Heart left ventricle (tissue), 16 donors: ENCODE measurements at regions of chr2 and their contacts with region 1.

Region 1: DNA sequence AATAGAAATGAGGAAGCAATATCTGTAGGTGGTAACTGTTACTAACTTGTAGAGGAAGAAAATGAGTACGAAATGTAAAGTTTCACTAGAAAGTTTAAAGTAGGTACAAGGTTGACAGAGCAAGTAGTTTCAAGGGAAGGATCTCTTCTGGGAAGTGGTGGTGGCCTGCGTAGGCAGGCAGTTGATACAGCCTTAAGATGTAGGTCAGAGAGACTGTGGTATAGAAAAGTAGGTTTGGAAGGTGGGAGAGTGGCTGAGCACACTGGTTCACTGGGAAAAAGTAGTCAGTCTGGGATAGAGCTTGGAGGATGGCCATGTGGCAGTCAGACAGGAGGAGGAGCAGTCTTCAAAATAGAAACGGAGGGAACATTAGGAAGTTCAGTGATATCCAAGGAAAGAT is 23.5 kb downstream of the KDM3A start:
- DNase-seq: peak in 4 of 5 donors; percentile 27 to 57 (median 44)
- ATAC-seq: peak; percentile 71 to 74 (median 72)
- H3K4me3 ChIP-seq: no peak overlapping the region
- H3K27ac ChIP-seq: peak overlapping the region in 7 of 12 donors; percentile 2 to 35 (median 6)
- H3K4me1 ChIP-seq: peaks cover 0 to 56% (median 28%) of the 10 kb centered on the region in 12 donors
- H3K27me3 ChIP-seq: no peaks in the 10 kb centered on the region
- CTCF ChIP-seq: no peak
- POLR2A ChIP-seq: no peak

Region 2: DNA sequence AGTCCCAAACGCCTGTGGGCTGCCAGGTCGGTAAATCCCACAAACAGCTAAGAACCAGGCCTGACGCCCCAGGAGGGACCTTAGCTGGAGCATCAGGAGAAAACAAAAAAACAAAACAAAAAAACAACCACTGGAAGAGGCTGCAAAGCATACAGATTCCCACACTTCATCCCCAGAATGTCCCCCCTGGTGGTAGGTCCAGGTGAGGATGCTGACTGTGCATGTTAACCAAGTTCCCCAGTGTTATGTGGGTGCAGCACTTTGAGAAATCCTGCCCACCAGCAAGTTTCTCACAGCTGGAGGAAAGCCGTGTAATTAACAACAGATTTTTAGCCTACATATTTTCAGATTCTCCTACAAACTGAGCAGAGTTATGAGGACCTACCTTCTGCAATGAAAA is 591.0 kb before region 1 on chr2:
- intact Hi-C with region 1: no loop called
- DNase-seq: no peak
- ATAC-seq: no peak
- H3K4me3 ChIP-seq: no peak overlapping the region
- H3K27ac ChIP-seq: no peak overlapping the region
- H3K4me1 ChIP-seq: peaks cover 0 to 39% (median 0%) of the 10 kb centered on the region in 12 donors
- H3K27me3 ChIP-seq: no peaks in the 10 kb centered on the region
- CTCF ChIP-seq: peak in 1 of 12 donors; percentile 14
- POLR2A ChIP-seq: no peak

Region 3: GRCh38 chr2:86492048-86492453 is 27.4 kb after region 1 on chr2:
- intact Hi-C with region 1: loop called in 1 of 10 experiments (anchors 2 kb)
- DNase-seq: no peak
- ATAC-seq: peak; percentile 16 to 65 (median 44)
- H3K4me3 ChIP-seq: no peak overlapping the region
- H3K27ac ChIP-seq: peak overlapping the region in 8 of 12 donors; percentile 11 to 72 (median 47)
- H3K4me1 ChIP-seq: peaks cover 0 to 29% (median 11%) of the 10 kb centered on the region in 12 donors
- H3K27me3 ChIP-seq: no peaks in the 10 kb centered on the region
- CTCF ChIP-seq: no peak
- POLR2A ChIP-seq: no peak

Region 4: DNA sequence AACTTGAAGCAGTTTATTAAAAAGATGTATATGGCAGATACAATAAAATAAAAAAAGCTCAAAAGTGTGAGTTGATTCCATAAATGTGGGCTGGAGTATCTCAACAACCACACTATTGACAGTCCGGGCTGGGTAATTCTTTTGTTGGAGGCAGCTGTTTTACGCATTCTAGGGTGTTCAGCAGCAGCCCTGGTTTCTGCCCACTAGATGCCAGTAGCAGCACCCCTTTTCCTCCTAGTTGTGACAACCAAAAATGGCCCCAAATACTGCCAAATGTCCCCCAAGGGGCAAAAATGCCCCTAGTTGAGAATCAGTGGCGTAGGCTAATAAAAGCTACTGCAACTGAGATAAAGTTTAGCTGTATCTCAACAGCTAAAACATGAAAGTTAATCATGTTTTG is 53.8 kb after region 1 on chr2:
- intact Hi-C with region 1: no loop called
- DNase-seq: no peak
- ATAC-seq: peak in 3 of 4 donors; percentile 61 to 63 (median 63)
- H3K4me3 ChIP-seq: no peak overlapping the region
- H3K27ac ChIP-seq: peak overlapping the region in 1 of 12 donors; percentile 12
- H3K4me1 ChIP-seq: peaks cover 0 to 13% (median 2%) of the 10 kb centered on the region in 12 donors
- H3K27me3 ChIP-seq: no peaks in the 10 kb centered on the region
- CTCF ChIP-seq: peak in 11 of 12 donors; percentile 12 to 59 (median 45)
- POLR2A ChIP-seq: no peak